Dendritic cell treated with granulocyte-macrophage colony-stimulating factor and Interleukin-4, amounts not matched to agents 40 ng/mL and 50 ng/mL, for 4 days (primary cell): ENCODE measurements at regions of chr12 and their contacts with region 1.

Region 1: GRCh38 chr12:40208707-40209446 is 15.9 kb upstream of the LRRK2 start:
- H3K4me3 Mint-ChIP-seq: peak overlapping the region; percentile 23
- H3K27ac Mint-ChIP-seq: peak overlapping the region; percentile 66
- H3K4me1 Mint-ChIP-seq: peaks cover 21% of the 10 kb centered on the region
- H3K27me3 Mint-ChIP-seq: no peaks in the 10 kb centered on the region

Region 2: DNA sequence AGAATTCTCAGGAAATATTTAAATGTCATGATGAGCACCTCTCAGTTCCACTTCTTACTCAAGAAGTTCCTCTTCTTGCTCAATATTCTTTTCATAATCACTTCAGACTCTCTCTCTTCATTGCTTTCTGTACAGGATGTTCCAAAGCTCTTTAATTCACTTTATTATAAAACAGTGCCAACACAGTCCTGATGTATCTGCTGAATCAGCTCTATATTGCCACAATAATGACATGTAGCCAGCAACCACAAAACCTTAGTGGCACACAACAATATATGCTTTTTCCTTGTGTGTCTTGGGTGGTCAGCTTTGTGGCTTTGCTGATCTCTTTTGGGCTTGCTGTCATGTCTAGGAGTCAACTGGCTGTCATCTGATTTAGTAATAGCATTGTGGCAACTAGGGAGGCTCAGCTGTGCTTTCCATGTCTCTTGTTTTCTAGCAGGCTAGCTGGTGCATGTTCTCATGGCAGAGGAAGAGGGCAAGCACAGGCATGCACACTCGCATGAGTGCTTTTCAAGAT is 50.2 kb before region 1 on chr12:
- intact Hi-C with region 1: loop called (anchors 5 kb)
- H3K4me3 Mint-ChIP-seq: no peak overlapping the region
- H3K27ac Mint-ChIP-seq: peak overlapping the region; percentile 86
- H3K4me1 Mint-ChIP-seq: peaks cover 42% of the 10 kb centered on the region
- H3K27me3 Mint-ChIP-seq: peaks cover 20% of the 10 kb centered on the region

Region 3: DNA sequence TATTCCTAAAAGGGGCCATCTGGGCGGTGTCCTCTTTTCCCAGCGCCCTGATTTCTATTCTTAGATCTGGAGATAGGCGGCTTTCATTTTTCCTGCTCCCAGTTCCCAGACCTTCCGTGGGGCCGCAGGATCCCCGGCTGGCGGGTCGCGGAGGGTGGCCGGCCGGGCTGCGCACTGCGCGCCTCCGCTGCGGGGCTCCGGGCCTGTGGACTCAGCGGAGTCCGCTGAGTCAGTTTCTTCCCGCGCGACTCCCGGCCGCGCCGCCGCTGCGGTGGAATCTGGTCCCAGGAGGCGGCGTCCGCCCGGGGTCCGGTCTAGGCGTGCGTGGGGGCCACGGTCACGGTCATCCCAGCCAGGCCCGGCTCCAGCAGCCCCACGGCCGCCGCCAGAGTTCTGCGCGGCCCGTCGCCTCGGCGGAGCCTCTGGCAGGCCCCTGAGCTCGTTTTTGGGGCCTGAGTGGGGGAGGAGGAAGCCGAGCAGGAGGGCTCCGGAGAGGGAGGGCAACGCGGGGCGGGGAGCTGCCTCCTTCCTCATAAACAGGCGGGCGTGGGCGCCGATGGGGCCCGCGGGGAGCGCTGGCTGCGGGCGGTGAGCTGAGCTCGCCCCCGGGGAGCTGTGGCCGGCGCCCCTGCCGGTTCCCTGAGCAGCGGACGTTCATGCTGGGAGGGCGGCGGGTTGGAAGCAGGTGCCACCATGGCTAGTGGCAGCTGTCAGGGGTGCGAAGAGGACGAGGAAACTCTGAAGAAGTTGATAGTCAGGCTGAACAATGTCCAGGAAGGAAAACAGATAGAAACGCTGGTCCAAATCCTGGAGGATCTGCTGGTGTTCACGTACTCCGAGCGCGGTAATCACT is 15.8 kb after region 1 on chr12 and contains the start of gene LRRK2:
- intact Hi-C with region 1: loop called (anchors 2 kb)
- H3K4me3 Mint-ChIP-seq: peak within 1 kb of the TSS; percentile 81
- H3K27ac Mint-ChIP-seq: peak within 1 kb of the TSS; percentile 87
- H3K4me1 Mint-ChIP-seq: peaks cover 55% of the 10 kb centered on the region
- H3K27me3 Mint-ChIP-seq: no peaks in the 10 kb centered on the region

Region 4: DNA sequence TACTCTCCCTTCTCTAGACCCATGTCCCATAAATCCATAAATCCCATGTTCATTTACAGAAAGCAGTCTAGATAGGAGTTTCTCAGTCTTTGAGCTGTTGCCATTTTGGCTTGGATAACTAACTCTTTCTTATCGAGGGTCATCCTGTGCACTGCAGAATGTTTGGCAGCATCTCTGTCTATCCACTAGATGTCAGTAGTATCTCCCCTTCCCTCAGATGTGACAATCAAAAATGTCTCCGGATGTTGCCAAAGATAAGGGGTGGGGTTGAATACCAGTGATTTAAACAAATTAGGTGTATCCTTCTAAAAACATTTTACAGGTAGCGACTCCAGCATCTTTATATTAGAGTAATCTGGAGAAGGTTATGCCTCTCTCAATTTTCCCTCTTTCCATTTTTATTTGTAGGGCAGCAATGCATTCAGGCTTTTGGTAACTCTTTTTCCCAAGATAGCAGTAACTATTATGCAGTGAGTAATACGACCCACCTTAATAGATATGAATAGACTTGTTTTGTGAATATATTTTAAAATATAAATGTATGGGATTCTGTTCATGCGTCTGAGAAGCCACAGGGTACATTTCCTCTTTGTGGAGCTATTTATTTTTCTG is 116.6 kb after region 1 on chr12:
- intact Hi-C with region 1: no loop called
- H3K4me3 Mint-ChIP-seq: no peak overlapping the region
- H3K27ac Mint-ChIP-seq: no peak overlapping the region
- H3K4me1 Mint-ChIP-seq: no peaks in the 10 kb centered on the region
- H3K27me3 Mint-ChIP-seq: no peaks in the 10 kb centered on the region